ENCODE measurements at regions of chr1 and their contacts with region 1.

Region 1: GRCh38 chr1:67214420-67215174 is 48.3 kb downstream of the IL23R start:
- DNase-seq: no peak
- H3K4me3 ChIP-seq: no peak overlapping the region
- CTCF ChIP-seq: peak; percentile 36

Region 2: DNA sequence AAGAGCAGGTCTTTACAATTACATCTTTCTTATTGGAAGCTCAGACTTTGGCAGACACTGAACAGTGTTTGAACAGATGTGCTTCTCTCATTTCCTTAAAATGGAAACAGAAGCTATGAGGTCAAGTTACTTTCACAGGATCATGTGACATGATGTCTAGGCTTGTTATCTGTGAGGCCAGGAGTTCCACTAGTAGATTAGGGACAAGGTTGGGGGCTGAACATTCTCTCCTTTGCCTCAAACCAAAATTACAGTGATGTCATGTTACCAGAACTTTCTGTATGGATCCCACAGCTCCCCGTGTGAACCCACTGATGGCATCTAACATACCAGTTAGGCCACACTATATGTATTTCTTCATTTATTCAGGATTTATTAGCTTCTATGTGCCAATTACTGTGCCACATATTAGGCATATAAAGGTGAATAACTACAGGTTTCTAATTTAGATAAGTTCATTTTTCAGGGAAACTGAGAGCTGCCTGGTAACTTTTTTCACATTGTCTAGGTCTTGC is 456.3 kb before region 1 on chr1:
- CTCF ChIA-PET with region 1: interaction called, 164 read pairs
- POLR2A ChIA-PET with region 1: no interaction called
- DNase-seq: no peak
- H3K4me3 ChIP-seq: no peak overlapping the region
- CTCF ChIP-seq: no peak

Region 3: GRCh38 chr1:66996018-66996682 is 218.4 kb before region 1 on chr1:
- CTCF ChIA-PET with region 1: interaction called, 95 read pairs
- POLR2A ChIA-PET with region 1: no interaction called
- DNase-seq: no peak
- H3K4me3 ChIP-seq: no peak overlapping the region
- CTCF ChIP-seq: peak; percentile 83

Region 4: DNA sequence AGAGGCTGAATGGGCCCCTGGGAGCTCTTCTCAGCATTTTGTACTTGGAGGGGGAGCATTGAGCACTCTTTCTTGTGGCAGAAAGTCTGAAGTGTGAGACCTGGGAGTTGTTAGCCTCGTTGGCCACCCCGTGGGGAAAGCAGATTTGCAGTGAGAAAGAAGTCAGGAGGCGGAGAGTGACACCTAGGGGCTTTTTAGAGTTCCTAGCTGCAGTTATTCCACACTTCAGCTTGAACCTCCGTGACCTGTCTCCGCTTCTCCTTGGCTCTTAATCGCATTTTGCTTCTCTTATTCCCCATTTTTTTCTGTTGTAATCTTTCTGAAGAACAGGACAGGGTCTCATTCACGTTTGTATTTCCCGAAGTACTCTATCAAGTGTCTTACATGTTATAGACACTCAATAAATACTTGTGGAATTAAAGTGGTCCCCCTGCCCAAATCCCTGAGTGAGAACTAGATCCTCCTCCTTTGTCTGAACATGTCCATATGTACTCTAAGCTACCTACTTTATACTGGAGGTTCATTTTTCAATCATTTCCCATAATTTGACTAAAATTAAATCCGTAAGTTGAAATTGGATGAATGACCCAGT is 65.3 kb before region 1 on chr1:
- CTCF ChIA-PET with region 1: interaction called, 18 read pairs
- POLR2A ChIA-PET with region 1: no interaction called
- DNase-seq: peak; percentile 28
- H3K4me3 ChIP-seq: no peak overlapping the region
- CTCF ChIP-seq: peak; percentile 80

Region 5: GRCh38 chr1:67201891-67202290 is 12.7 kb before region 1 on chr1:
- CTCF ChIA-PET with region 1: interaction called, 21 read pairs
- POLR2A ChIA-PET with region 1: no interaction called
- DNase-seq: no peak
- H3K4me3 ChIP-seq: no peak overlapping the region
- CTCF ChIP-seq: no peak

Region 6: GRCh38 chr1:67285780-67286488 is 71.3 kb after region 1 on chr1:
- CTCF ChIA-PET with region 1: interaction called, 14 read pairs
- POLR2A ChIA-PET with region 1: no interaction called
- DNase-seq: no peak
- H3K4me3 ChIP-seq: no peak overlapping the region
- CTCF ChIP-seq: no peak

Region 7: GRCh38 chr1:67489643-67490042 is 275.0 kb after region 1 on chr1:
- CTCF ChIA-PET with region 1: interaction called, 30 read pairs
- POLR2A ChIA-PET with region 1: interaction called, 3 read pairs
- DNase-seq: no peak
- H3K4me3 ChIP-seq: no peak overlapping the region
- CTCF ChIP-seq: no peak

Measured in AG04449 (cell line).